ENCODE measurements at regions of chr6 and their contacts with region 1.

Region 1: GRCh38 chr6:107674995-107675738 is 148.9 kb downstream of the SCML4 start:
- H3K4me3 Mint-ChIP-seq: no peak overlapping the region
- H3K27ac Mint-ChIP-seq: no peak overlapping the region
- H3K4me1 Mint-ChIP-seq: peaks cover 50% of the 10 kb centered on the region
- H3K27me3 Mint-ChIP-seq: peaks cover 31% of the 10 kb centered on the region

Region 2: DNA sequence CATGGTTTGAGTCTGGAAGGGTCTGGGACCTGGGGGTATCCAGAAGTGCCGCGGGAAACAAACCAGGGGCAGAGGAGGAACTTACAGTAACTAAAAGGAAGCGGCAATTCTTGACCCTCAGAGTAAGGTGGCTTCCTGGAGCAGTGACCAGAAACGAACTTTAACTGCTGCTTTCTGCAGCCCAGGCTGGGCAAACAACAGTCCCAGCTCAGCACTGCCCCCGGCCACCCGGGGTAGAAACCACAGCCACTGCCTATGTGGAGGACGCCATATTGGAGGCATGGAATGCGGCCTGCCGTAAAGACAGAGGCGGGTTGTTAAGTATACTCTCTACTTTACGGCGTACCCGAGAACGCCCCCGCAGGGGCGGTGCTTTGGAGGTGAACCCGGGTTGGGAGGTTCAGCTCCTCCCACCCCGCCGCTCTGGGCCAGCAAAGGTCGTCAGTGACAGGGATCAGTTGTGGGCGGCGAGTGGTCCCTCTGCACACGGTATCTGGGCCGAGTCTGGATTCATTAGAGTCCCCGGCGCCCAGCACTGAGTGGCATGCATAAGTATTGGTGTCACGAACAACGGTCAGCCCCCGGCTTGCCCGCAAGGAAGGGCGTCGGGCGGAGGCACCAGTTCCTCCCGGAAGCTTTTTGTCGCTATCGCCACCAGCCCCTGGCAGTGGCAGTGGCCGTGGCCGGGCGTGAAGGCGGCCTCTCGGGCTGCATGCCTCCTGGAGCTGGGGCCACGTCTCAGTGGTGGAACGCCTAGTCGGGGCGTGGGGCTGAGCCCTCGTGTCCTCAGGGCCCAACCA is 215.7 kb before region 1 on chr6 and contains the start of gene PDSS2:
- intact Hi-C with region 1: loop called (anchors 2 kb)
- H3K4me3 Mint-ChIP-seq: peak within 1 kb of the TSS; percentile 96
- H3K27ac Mint-ChIP-seq: peak within 1 kb of the TSS; percentile 99
- H3K4me1 Mint-ChIP-seq: peaks cover 28% of the 10 kb centered on the region
- H3K27me3 Mint-ChIP-seq: peaks cover 1% of the 10 kb centered on the region

Region 3: DNA sequence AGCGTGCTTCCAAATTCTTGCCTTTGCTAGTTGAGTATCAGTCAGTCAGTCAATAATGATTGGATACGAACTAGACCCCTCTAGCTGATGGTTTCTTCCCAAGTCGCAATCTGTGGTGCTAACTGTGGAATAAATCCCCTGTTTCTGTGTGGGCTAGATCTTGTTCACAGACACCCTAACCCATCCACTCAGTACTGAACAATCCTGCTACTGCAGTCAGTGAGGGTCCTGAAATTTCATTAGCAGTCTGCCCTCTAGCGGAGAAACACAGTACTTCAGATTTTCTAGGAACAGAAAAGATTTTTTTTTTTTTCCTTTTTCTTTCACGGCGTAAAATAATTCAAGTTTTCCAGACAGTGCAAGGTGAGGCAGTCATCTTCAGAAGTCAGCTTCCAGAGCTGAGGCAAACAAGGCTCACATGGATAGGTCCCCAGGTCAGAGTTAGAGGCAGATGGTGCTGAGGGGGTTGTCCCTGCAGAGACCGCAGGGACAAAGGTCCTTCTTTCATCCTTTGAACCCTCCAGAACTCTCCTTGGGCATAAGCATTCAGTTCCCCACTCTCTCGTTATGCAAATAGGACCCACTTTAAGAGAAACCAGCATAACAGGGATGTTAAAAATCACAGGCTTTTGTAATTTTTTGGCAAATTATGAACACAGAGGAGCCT is 29.3 kb after region 1 on chr6:
- intact Hi-C with region 1: loop called (anchors 2 kb)
- H3K4me3 Mint-ChIP-seq: no peak overlapping the region
- H3K27ac Mint-ChIP-seq: no peak overlapping the region
- H3K4me1 Mint-ChIP-seq: peaks cover 8% of the 10 kb centered on the region
- H3K27me3 Mint-ChIP-seq: peaks cover 11% of the 10 kb centered on the region

Region 4: DNA sequence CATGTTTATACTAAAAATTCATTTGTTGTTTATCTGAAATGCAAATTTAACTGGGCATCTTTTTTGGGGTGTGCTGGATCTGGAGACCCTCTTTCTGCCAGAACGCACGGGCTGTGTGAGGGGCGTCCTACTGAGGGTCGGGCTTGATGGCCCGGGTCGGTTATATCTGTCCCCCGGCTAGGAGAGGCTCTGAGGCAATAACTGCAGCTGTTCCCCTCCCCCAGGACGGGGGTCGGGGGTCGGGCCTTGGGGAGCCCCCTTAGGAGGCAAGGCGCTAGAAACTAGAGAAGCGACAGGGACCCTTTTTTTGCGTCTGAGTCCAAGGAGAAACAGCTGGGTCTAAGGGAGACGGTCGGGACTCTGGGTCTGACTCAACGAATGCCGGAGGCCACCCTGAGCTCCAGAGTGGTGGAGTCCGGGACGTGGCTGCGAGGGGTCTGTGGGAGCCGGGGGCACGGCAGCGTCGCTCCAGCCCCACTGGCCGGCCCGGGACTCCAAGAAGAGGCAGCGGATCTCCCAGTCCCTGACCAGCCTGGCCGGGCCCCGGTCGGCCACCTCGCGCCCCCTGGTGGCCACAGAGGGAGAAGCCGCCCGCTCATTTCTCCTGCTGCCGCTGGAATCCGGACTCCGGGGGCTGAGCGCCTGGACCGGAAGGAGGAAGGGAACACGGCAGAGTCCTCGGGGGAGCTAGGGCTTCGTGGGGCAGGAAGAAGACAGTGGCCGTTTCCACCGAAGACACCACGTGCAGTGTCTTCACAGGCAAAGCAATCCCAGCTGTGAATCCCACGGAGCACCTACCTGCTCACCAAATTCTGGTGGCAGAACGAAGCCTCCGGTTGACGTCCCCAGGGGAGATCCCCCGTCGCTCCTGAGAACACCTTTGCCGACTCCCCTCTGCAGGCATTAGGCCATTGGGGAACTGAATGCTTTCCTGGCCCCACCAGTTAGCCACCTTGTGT is 173.0 kb after region 1 on chr6:
- intact Hi-C with region 1: loop called (anchors 1 kb)
- H3K4me3 Mint-ChIP-seq: peak overlapping the region; percentile 72
- H3K27ac Mint-ChIP-seq: peak overlapping the region; percentile 20
- H3K4me1 Mint-ChIP-seq: peaks cover 17% of the 10 kb centered on the region
- H3K27me3 Mint-ChIP-seq: peaks cover 29% of the 10 kb centered on the region

Region 5: DNA sequence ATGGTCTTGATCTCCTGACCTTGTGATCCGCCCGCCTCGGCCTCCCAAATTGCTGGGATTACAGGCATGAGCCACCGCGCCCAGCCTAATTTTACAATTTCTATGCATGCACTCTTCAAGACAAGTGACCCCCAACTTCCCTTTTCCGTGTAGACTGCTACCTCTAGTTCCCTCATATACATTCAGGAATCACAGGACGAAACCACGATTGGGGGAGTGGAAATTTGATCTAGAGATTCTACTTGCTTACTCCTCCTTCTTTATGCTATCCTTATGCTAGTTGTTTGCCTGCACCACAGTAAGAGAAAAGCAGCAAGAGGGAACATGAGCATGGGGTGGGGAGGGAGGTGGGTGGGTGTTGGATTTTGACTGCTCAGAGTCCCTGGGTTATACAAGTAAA is 364.5 kb after region 1 on chr6:
- intact Hi-C with region 1: loop called (anchors 10 kb)
- H3K4me3 Mint-ChIP-seq: no peak overlapping the region
- H3K27ac Mint-ChIP-seq: no peak overlapping the region
- H3K4me1 Mint-ChIP-seq: no peaks in the 10 kb centered on the region
- H3K27me3 Mint-ChIP-seq: no peaks in the 10 kb centered on the region